HEK293 (cell line): ENCODE measurements at regions of chr2 and their contacts with region 1.

Region 1: GRCh38 chr2:169131587-169132512 is 62.5 kb downstream of the DHRS9 start:
- H3K4me3 ChIP-seq: no peak overlapping the region
- H3K27ac ChIP-seq: no peak overlapping the region
- H3K4me1 ChIP-seq: no peaks in the 10 kb centered on the region
- CTCF ChIP-seq: peak; percentile 32; the same call in 1 of the 2 replicates

Region 2: DNA sequence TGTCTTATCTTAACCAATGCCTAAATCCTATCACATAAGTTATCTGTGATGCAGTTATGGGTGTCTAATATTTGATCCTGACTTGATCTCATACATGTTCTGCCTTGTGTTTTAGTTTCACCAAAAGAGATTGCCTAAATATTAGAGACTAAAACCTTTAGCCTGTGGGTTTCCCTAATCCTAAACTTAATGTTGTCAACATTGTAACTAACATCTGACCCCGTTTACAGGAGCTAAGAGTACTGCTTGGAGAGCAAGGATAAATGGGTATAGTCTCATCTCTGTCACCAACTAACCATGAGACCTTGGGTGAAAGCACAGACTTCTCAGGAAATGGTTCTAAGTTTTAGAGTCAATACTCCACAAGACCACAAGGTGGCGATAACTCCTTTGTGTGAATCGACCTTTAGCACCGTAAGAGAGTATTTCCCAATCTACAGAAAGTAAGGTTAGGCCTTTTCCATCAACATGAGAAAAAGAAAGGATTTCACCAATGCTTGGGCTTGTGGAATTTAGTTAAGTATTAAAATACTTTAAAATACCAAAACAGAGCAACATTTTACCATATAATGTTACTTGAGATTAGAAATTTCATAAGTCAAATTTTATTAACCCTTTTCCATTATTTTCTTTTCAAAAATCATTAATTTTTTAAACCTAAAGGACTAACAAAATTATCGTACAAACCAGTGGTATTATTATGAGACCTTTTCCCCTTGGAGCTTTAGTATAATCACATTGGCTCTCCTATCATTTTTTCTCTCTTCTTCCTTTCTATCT is 170.2 kb before region 1 on chr2:
- CTCF ChIA-PET with region 1: interaction called, 17 read pairs
- POLR2A ChIA-PET with region 1: no interaction called
- H3K4me3 ChIP-seq: no peak overlapping the region
- H3K27ac ChIP-seq: no peak overlapping the region
- H3K4me1 ChIP-seq: no peaks in the 10 kb centered on the region
- CTCF ChIP-seq: peak; percentile 35; the same call in 1 of the 2 replicates

Region 3: GRCh38 chr2:169119126-169119770 is 12.6 kb before region 1 on chr2:
- CTCF ChIA-PET with region 1: interaction called, 28 read pairs
- POLR2A ChIA-PET with region 1: no interaction called
- H3K4me3 ChIP-seq: no peak overlapping the region
- H3K27ac ChIP-seq: no peak overlapping the region
- H3K4me1 ChIP-seq: no peaks in the 10 kb centered on the region
- CTCF ChIP-seq: no peak

Region 4: GRCh38 chr2:169221745-169222369 is 90.0 kb after region 1 on chr2:
- CTCF ChIA-PET with region 1: interaction called, 15 read pairs
- POLR2A ChIA-PET with region 1: no interaction called
- H3K4me3 ChIP-seq: no peak overlapping the region
- H3K27ac ChIP-seq: no peak overlapping the region
- H3K4me1 ChIP-seq: no peaks in the 10 kb centered on the region
- CTCF ChIP-seq: peak; percentile 26; the same call in 1 of the 2 replicates

Region 5: DNA sequence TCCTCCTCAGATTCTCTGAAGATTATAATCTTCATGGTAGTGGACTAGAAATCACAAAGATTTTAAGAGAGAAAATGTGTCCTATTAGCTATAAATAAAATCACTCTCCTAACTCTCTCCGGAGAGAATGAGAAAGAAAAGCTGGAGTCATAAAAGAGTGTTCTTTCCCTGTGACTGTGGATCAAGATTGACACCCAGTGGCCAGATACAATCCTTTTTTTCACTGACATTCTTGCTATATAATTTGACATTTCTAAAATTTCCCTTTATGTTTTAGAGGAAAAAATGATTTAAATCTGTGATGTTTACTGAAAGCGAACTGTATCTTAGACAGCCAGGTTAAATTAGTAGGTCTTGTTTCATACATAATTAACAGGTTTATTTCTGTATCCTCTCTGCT is 265.8 kb after region 1 on chr2:
- CTCF ChIA-PET with region 1: interaction called, 13 read pairs
- POLR2A ChIA-PET with region 1: no interaction called
- H3K4me3 ChIP-seq: no peak overlapping the region
- H3K27ac ChIP-seq: no peak overlapping the region
- H3K4me1 ChIP-seq: no peaks in the 10 kb centered on the region; the same call in 1 of the 2 replicates
- CTCF ChIP-seq: peak; percentile 39; the same call in 1 of the 2 replicates